MCF 10A (cell line): ENCODE measurements at regions of chr4 and their contacts with region 1.

Region 1: DNA sequence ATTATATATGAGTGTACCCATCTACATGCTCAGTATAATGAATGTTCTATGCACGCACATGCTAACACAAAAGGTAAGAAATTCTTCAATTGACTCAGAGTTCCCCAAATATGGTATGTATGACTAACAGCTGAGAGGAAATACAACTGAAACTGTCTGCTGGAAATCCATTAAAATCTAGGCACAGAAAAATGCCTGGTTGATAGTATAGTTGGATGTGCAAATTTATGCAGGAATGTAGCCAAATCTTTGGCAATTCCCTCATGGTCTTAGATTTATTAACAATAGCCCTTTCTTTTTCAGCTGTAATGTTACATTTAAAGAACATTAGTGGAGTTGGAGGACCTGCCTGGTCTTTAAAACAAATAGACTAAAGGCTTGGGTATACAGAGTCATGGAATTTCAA is 5.5 kb downstream of the CAMK2D start:
- DNase-seq: peak; percentile 70
- H3K4me3 Mint-ChIP-seq: no peak overlapping the region
- H3K27ac Mint-ChIP-seq: no peak overlapping the region
- H3K4me1 Mint-ChIP-seq: peaks cover 18% of the 10 kb centered on the region
- H3K27me3 Mint-ChIP-seq: no peaks in the 10 kb centered on the region
- CTCF ChIP-seq: no peak

Region 2: GRCh38 chr4:113657586-113658233 is 98.3 kb before region 1 on chr4:
- CTCF ChIA-PET with region 1: interaction called, 3 read pairs
- POLR2A ChIA-PET with region 1: interaction called, 4 read pairs
- intact Hi-C with region 1: loop called (anchors 10 kb)
- DNase-seq: peak; percentile 64
- H3K4me3 Mint-ChIP-seq: no peak overlapping the region
- H3K27ac Mint-ChIP-seq: peak overlapping the region; percentile 8
- H3K4me1 Mint-ChIP-seq: peaks cover 22% of the 10 kb centered on the region
- H3K27me3 Mint-ChIP-seq: no peaks in the 10 kb centered on the region
- CTCF ChIP-seq: no peak

Region 3: GRCh38 chr4:113809311-113809710 is 53.3 kb after region 1 on chr4:
- CTCF ChIA-PET with region 1: no interaction called
- POLR2A ChIA-PET with region 1: no interaction called
- intact Hi-C with region 1: no loop called
- DNase-seq: peak; percentile 80
- H3K4me3 Mint-ChIP-seq: no peak overlapping the region
- H3K27ac Mint-ChIP-seq: peak overlapping the region; percentile 25
- H3K4me1 Mint-ChIP-seq: peaks cover 8% of the 10 kb centered on the region
- H3K27me3 Mint-ChIP-seq: no peaks in the 10 kb centered on the region
- CTCF ChIP-seq: no peak